Left ventricle myocardium superior (tissue), 1 donor: ENCODE measurements at regions of chr1 and their contacts with region 1.

Region 1: GRCh38 chr1:99707535-99708142 is 58.8 kb downstream of the FRRS1 start:
- DNase-seq: peak; percentile 69
- ATAC-seq: peak; percentile 70

Region 2: GRCh38 chr1:99180343-99180808 is 527.3 kb before region 1 on chr1:
- intact Hi-C with region 1: loop called (anchors 5 kb)
- DNase-seq: peak; percentile 46
- ATAC-seq: peak; percentile 94

Region 3: DNA sequence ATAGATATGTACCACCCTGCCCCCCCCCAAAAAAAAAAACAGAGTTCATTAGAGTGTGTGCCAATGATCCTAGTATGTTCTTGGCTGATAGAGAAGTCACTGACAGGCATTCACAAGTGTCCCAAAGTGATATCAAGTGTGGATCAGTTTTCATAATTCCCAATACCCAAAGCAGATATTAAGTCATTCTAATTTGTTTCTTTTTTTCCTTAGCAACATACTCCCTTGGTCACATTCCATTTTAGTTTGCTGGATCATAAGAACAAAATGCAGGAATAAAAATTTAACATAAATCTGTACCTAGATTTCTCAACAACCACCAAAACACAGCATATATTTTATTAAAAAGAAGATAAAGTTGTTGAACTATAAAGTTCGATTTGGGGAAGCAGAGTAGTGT is 191.5 kb before region 1 on chr1:
- intact Hi-C with region 1: no loop called
- DNase-seq: no peak
- ATAC-seq: no peak

Region 4: GRCh38 chr1:99590578-99591209 is 116.9 kb before region 1 on chr1:
- intact Hi-C with region 1: no loop called
- DNase-seq: peak; percentile 53
- ATAC-seq: peak; percentile 87